ENCODE measurements at regions of chr20 and their contacts with region 1.

Region 1: DNA sequence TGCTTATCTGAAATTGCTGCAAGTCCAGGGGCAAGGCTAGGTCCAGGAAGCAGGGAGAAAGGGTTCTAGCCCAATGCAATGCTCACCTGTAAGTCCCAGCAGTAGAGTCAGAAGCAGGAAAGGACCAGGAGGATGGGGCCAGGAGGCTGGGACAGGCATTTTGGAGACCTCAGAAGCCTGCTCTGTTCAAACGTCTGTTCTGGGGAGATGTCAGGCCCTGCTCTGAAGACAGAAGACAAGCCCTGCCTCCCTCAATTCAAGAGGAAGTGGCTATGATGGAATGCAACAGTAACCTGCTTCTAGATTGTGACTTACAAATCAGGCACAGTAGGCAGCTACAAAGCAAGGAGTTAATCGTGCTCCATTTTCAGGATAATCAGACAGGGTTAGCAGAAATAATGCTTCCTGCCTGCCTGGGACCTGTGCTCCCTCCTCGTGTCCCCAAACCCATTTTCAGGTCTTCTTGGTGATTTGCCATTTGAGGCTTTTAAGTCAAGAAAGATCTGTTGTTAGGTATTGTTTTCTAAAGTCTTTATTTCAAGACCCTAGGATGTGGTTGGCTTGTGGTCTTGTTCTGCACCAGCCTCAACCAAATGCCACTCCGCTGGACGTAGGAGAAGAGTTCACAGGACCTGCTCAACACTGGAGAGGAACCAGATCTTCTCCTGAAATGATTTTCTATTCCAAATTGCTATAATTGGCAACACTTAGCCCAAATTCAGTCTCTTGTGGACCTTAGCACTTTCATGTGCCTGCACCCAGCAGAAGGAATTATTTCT is at the start of gene SIRPG:
- DNase-seq: peak; percentile 63
- H3K4me3 Mint-ChIP-seq: peak within 1 kb of the TSS; percentile 84
- H3K27ac Mint-ChIP-seq: peak within 1 kb of the TSS; percentile 99
- H3K4me1 Mint-ChIP-seq: peaks cover 86% of the 10 kb centered on the region
- H3K27me3 Mint-ChIP-seq: no peaks in the 10 kb centered on the region
- total RNA-seq, gene SIRPG: 27.9 to 28.5 TPM

Region 2: GRCh38 chr20:1588533-1589460 is 68.9 kb before region 1 on chr20:
- CTCF ChIA-PET with region 1: no interaction called
- POLR2A ChIA-PET with region 1: no interaction called
- intact Hi-C with region 1: loop called (anchors 5 kb)
- DNase-seq: peak; percentile 44
- H3K4me3 Mint-ChIP-seq: no peak overlapping the region
- H3K27ac Mint-ChIP-seq: peak overlapping the region; percentile 88
- H3K4me1 Mint-ChIP-seq: peaks cover 26% of the 10 kb centered on the region
- H3K27me3 Mint-ChIP-seq: no peaks in the 10 kb centered on the region

Region 3: GRCh38 chr20:1625083-1625690 is 32.6 kb before region 1 on chr20:
- CTCF ChIA-PET with region 1: no interaction called
- POLR2A ChIA-PET with region 1: no interaction called
- intact Hi-C with region 1: loop called (anchors 1 kb)
- DNase-seq: no peak
- H3K4me3 Mint-ChIP-seq: no peak overlapping the region
- H3K27ac Mint-ChIP-seq: peak overlapping the region; percentile 66
- H3K4me1 Mint-ChIP-seq: peaks cover 87% of the 10 kb centered on the region
- H3K27me3 Mint-ChIP-seq: no peaks in the 10 kb centered on the region

Region 4: DNA sequence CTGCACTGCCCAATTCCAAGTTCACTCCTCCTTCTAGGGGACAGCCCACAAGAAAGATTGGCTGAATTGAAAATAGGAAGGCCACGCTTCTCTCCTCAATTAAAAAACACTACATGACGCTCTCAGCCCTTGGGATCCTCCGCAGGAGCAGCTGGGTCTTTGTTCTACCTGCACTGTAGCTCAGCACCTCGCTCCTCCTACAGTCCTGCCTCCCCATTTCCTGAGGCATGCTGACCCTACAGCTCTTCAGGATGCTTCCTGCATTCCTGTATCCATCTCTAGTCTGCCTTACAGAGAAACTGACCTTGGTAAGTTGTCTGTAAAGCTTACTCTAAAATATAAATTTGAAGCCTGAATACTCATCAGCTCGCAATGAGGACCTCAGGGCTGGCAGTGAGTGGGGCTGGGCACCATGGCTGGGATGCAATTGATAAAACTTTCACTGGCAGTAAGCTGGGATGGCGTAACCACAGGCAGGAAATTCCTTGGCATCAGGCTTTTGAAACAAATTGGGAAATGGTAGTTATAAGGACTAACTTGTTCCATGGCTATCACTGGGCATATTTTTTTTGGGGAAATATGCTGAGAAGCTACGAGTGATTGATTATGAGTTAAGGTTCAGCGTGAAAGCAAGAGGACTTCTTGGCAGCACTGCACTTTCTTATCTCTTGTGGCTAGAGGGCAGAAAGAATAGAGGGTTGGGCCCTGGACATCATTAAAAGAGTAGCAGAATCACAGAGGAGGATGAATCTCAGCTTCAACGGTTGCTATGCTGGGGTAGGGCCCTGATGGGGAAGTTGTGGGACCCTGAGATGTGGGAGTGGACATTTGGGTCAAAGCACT is 26.2 kb before region 1 on chr20:
- CTCF ChIA-PET with region 1: no interaction called
- POLR2A ChIA-PET with region 1: no interaction called
- intact Hi-C with region 1: loop called (anchors 1 kb)
- DNase-seq: no peak
- H3K4me3 Mint-ChIP-seq: peak overlapping the region; percentile 0
- H3K27ac Mint-ChIP-seq: peak overlapping the region; percentile 55
- H3K4me1 Mint-ChIP-seq: peaks cover 63% of the 10 kb centered on the region
- H3K27me3 Mint-ChIP-seq: no peaks in the 10 kb centered on the region

Region 5: GRCh38 chr20:1671891-1672669 is 14.3 kb after region 1 on chr20:
- CTCF ChIA-PET with region 1: interaction called, 4 read pairs
- POLR2A ChIA-PET with region 1: interaction called, 6 read pairs
- intact Hi-C with region 1: loop called (anchors 1 kb)
- DNase-seq: peak; percentile 64
- H3K4me3 Mint-ChIP-seq: peak overlapping the region; percentile 47
- H3K27ac Mint-ChIP-seq: peak overlapping the region; percentile 97
- H3K4me1 Mint-ChIP-seq: peaks cover 97% of the 10 kb centered on the region
- H3K27me3 Mint-ChIP-seq: no peaks in the 10 kb centered on the region

Region 6: DNA sequence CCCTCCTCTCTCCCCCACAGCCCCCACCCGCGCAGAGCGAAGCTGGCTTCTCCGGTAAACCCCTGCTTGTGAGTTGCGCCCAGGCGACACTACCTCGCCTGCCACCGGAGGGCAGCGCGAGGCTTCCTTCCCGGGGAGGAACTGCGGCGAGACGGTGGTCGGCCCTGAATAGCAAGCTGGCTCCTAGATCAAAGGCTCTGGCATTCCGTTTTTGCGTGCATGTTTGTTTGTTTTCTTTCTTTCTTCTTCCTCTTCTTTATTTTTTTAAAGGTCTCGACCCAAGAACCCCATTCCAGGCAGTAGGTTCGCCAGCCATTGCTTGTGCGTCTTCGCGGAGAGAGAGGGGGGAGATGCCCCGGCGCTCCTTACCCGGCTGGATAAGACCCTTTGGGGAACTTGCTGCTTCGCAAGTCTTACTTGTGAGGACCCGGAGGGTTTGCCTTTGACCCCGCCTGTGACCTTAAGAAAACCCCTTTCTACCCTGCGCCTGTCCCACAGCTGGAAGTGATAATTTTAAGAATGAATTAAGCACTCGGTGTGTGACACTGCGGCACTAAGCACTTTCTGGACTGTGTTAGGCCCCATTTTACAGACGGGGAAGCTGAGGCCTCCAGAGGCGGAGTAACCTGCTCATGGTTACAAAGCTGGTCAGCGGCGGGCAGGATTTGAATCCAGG is 144.8 kb after region 1 on chr20:
- CTCF ChIA-PET with region 1: no interaction called
- POLR2A ChIA-PET with region 1: no interaction called
- intact Hi-C with region 1: no loop called
- DNase-seq: peak; percentile 56
- H3K4me3 Mint-ChIP-seq: peak overlapping the region; percentile 1
- H3K27ac Mint-ChIP-seq: no peak overlapping the region
- H3K4me1 Mint-ChIP-seq: peaks cover 10% of the 10 kb centered on the region
- H3K27me3 Mint-ChIP-seq: peaks cover 40% of the 10 kb centered on the region

Measured in activated CD4-positive, alpha-beta memory T cell treated with anti-CD3 and anti-CD28 coated beads for 36 hours (primary cell).